Cardiac septum (tissue), 1 donor: ENCODE measurements at regions of chr2 and their contacts with region 1.

Region 1: DNA sequence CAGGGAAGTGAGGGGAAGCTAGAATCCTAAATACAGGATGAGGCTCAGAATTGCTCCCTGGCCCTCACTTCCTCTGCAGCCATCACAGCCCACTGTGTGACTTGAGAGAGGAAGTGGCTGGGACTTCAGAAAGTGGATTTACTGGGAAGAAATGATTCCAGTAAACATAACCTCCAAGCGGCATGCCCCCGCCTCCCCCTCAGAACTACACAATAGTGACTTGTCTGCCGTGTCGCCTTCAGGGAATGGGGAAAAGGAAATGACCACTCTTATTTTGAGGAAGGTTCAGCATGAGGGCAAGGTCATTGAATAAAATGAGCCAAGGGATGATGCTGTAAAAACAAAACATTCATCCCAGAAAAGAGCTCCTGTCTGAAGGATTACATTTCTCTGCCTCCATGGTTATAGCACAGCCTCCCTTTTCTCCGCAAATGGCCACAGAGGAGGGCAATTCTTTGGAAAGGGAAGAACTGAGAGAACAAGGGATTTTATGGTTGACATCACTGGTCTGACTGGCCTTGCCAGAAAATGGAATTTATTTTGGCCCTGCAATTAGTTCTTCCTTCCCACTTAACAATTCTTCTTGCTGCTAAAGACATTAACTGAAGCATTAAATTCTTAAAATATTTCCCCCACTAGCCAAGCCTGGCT is 78.9 kb upstream of the DAPL1 start:
- DNase-seq: peak; percentile 87

Region 2: GRCh38 chr2:158473719-158474392 is 242.4 kb before region 1 on chr2:
- intact Hi-C with region 1: no loop called
- DNase-seq: no peak

Region 3: GRCh38 chr2:158600155-158600802 is 116.0 kb before region 1 on chr2:
- intact Hi-C with region 1: loop called (anchors 1 kb)
- DNase-seq: peak; percentile 77

Region 4: DNA sequence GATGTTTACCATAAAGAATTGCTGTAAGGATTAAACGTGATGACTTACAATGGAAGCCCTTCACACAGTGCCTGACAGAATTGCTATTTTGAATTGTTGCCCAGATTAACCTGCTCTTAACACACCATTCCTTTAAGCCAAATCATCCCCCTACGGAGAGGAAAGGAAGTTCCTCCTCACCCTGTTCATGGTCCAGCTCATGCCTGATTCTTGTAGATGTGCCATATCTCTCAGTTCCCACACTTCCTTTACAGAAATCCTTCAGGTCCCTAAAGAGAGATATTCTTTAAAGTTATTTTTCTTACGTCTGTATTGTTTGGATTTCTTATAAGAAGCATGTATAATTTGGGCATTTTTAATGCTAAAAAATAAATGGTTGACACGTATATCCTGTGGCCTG is 48.7 kb before region 1 on chr2:
- intact Hi-C with region 1: loop called (anchors 5 kb)
- DNase-seq: no peak